GM23248 (cell line): ENCODE measurements at regions of chr12 and their contacts with region 1.

Region 1: DNA sequence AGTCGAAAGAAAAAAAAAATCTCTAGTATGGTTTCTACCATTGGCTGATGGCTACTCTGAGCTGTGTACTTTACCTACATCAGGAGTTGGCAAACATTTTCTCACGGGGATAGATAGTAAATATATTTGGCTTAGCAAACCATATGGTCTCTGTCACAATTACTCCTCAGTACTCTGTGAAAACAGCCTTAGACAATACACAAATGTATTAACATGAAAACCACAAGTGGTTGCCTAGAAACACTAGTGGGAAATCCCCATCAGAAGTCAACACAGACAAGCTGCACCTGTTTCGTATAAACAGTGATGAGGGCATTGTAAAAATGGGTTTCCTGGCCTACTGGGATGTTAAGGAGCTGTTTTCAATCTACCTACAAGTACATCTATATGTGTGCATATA is 84.6 kb upstream of the NAV3 start:
- DNase-seq: no peak
- H3K4me3 ChIP-seq: no peak overlapping the region
- H3K27ac ChIP-seq: no peak overlapping the region
- H3K4me1 ChIP-seq: no peaks in the 10 kb centered on the region
- H3K27me3 ChIP-seq: no peaks in the 10 kb centered on the region

Region 2: DNA sequence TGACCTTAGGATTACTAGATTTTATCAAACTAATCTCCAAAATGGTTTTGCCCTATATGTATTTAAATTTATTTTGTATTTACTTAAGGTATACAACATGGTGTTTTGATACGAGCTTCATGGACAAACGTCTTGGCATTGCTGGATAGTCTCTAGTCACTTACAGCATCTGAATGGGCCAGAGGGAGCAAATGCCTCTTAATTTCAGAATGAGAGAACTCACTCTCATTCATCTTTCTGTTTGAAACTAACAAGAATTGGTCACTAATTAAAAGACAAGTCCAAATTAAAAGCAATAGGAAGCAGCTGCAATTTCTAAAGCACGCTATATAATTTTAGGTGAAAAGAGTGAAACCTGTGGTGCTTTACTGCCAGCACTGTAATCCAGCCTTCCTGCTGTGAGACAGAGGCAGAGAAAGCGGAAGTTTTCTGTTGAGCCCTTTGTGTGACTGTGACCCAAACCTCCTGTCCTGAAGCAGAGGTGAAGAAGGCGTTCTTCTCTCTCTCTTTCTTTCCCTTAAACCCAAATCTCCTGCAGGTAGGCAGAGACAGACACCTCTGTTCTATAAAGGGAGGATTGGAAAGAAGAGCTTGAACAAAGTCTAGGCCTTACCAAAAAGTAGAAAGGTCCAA is 100.0 kb before region 1 on chr12:
- in situ Hi-C with region 1: no loop called
- DNase-seq: no peak
- H3K4me3 ChIP-seq: no peak overlapping the region
- H3K27ac ChIP-seq: no peak overlapping the region
- H3K4me1 ChIP-seq: no peaks in the 10 kb centered on the region
- H3K27me3 ChIP-seq: no peaks in the 10 kb centered on the region

Region 3: GRCh38 chr12:77837876-77838291 is 91.8 kb after region 1 on chr12:
- in situ Hi-C with region 1: no loop called
- DNase-seq: no peak
- H3K4me3 ChIP-seq: no peak overlapping the region
- H3K27ac ChIP-seq: no peak overlapping the region
- H3K4me1 ChIP-seq: no peaks in the 10 kb centered on the region
- H3K27me3 ChIP-seq: peaks cover 3% of the 10 kb centered on the region

Region 4: GRCh38 chr12:78120866-78121560 is 374.9 kb after region 1 on chr12:
- in situ Hi-C with region 1: loop called (anchors 25 kb)
- DNase-seq: peak; percentile 62
- H3K4me3 ChIP-seq: no peak overlapping the region
- H3K27ac ChIP-seq: no peak overlapping the region
- H3K4me1 ChIP-seq: peaks cover 17% of the 10 kb centered on the region
- H3K27me3 ChIP-seq: no peaks in the 10 kb centered on the region